ENCODE measurements at regions of chr7 and their contacts with region 1.

Region 1: GRCh38 chr7:157273208-157274093 is 63.4 kb upstream of the DNAJB6 start:
- DNase-seq: peak; percentile 81
- ATAC-seq: peak; percentile 82
- H3K4me3 Mint-ChIP-seq: no peak overlapping the region
- H3K27ac Mint-ChIP-seq: peak overlapping the region; percentile 86; the same call in 1 of the 2 replicates
- H3K4me1 Mint-ChIP-seq: peaks cover 21% of the 10 kb centered on the region
- H3K27me3 Mint-ChIP-seq: no peaks in the 10 kb centered on the region
- CTCF ChIP-seq: peak; percentile 93

Region 2: GRCh38 chr7:157228864-157229422 is 44.5 kb before region 1 on chr7:
- CTCF ChIA-PET with region 1: interaction called, 10 read pairs
- POLR2A ChIA-PET with region 1: no interaction called
- DNase-seq: peak; percentile 66
- ATAC-seq: peak; percentile 90
- H3K4me3 Mint-ChIP-seq: no peak overlapping the region
- H3K27ac Mint-ChIP-seq: no peak overlapping the region
- H3K4me1 Mint-ChIP-seq: no peaks in the 10 kb centered on the region
- H3K27me3 Mint-ChIP-seq: no peaks in the 10 kb centered on the region
- CTCF ChIP-seq: no peak; the same call in 1 of the 2 replicates

Region 3: DNA sequence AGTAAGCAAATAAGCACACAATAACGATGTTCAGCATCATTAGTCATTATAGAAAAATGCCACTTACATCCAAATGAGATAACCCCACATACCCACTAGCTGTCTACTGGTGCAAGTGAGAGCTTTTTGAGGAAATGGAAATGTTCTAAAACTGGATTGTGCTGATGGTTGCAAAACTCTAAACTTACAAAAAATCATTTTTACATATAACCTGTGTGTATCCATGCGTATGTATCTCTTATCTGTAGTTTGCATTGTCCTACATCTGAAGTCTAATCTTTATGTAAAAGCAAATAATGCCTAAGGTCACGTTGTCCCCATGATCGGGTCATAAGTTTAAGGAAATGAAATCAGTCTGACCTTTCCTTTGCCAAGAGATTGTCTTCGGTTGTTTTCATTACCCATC is 18.2 kb before region 1 on chr7:
- CTCF ChIA-PET with region 1: no interaction called
- POLR2A ChIA-PET with region 1: no interaction called
- DNase-seq: no peak
- ATAC-seq: no peak
- H3K4me3 Mint-ChIP-seq: no peak overlapping the region
- H3K27ac Mint-ChIP-seq: no peak overlapping the region
- H3K4me1 Mint-ChIP-seq: no peaks in the 10 kb centered on the region
- H3K27me3 Mint-ChIP-seq: no peaks in the 10 kb centered on the region
- CTCF ChIP-seq: no peak

Measured in WTC11 (cell line).